HepG2 (cell line): ENCODE measurements at regions of chr20 and their contacts with region 1.

Region 1: DNA sequence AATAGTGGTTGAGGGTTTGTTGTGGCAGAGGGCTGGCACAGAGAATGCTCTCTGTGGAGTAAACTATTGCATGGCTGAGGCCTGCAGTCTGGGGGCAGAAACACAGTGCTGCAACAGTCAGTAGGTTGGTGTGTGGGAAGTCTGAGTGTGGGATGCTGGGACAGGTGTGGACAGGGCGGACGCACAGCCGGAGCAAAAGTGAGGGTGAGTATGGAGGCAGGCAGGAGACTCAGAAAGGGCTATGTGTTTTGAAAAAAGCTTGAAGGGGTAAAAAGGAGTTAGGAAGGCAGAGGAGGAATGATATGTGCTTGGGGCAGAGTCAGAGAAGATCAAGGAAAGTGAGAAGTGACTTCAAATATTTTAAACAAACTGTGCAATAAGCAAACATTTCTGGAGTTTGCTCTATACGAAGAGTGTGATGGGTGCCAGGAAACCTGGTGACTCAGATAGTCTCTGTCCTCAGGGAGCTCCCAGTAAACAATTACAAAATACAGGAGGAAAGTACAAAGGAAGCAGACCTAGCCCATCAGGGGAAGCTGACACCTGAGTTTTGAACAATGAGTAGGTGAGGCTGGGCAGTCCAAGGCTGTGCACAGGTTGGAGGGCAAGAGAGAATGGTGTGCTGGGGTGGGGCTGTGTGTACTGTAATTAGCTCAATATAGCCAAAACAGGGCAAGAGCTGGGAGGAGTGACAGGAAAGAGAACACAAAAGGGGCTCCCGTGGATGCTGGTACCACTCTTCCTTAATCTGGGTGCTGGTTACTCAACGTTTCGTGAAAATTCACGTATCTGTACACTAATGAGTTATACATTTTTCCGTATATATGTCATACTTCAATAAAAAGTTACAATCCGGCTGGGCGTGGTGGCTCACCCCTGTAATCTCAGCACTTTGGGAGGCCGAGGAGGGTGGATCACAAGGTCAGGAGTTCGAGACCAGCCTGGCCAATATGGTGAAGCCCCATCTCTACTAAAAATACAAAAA is 55.2 kb downstream of the PIGU start:
- DNase-seq: peak; percentile 100
- ATAC-seq: peak; percentile 96
- H3K4me3 ChIP-seq: peak overlapping the region in 1 of 3 experiments; percentile 43; a peak in 2 of 6 replicates
- H3K27ac ChIP-seq: peak overlapping the region; percentile 89
- H3K4me1 ChIP-seq: peaks cover 65% of the 10 kb centered on the region
- H3K27me3 ChIP-seq: no peaks in the 10 kb centered on the region
- CTCF ChIP-seq: no peak; the same call in 1 of the 2 replicates
- EP300 ChIP-seq: peak; percentile 95 to 100
- POLR2A ChIP-seq: peak; percentile 22; a peak in 1 of 4 replicates
- RAD21 ChIP-seq: no peak; the same call in 1 of the 2 replicates

Region 2: DNA sequence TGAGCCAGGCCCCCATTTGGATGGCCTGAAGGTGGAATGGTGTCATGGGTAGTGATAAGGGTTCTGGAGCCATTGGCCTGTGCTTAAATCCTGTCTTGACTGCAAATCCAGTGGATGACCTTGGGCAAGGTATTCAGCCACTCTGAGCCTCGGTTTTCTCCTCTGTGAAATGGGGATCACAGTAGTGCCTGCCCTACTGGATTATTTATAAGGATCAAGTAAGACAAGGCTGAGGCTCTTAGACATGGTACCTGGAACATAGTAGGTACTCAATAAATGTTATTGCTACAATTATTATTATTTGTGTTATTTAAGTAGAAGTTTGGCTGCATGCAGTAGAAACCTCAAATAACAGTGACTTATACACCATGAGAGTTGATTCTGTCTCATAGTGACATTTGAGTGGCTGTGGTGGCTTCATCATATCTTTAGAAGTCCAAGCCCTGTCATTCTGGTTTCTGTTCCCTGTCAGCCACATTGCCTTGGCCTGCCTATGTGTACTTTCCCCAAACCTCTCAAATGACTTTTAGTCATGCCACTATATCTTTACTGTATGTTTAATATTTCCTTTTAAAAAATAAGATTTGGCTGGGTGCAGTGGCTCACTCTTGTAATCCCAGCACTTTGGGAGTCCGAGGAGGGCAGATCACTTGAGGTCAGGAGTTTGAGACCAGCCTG is 848.1 kb before region 1 on chr20:
- CTCF ChIA-PET with region 1: no interaction called
- POLR2A ChIA-PET with region 1: no interaction called
- in situ Hi-C with region 1: no loop called
- intact Hi-C with region 1: no loop called
- DNase-seq: no peak
- ATAC-seq: no peak
- H3K4me3 ChIP-seq: no peak overlapping the region
- H3K27ac ChIP-seq: no peak overlapping the region
- H3K4me1 ChIP-seq: peaks cover 10% of the 10 kb centered on the region
- H3K27me3 ChIP-seq: no peaks in the 10 kb centered on the region
- CTCF ChIP-seq: no peak
- EP300 ChIP-seq: no peak
- POLR2A ChIP-seq: no peak
- RAD21 ChIP-seq: no peak

Region 3: DNA sequence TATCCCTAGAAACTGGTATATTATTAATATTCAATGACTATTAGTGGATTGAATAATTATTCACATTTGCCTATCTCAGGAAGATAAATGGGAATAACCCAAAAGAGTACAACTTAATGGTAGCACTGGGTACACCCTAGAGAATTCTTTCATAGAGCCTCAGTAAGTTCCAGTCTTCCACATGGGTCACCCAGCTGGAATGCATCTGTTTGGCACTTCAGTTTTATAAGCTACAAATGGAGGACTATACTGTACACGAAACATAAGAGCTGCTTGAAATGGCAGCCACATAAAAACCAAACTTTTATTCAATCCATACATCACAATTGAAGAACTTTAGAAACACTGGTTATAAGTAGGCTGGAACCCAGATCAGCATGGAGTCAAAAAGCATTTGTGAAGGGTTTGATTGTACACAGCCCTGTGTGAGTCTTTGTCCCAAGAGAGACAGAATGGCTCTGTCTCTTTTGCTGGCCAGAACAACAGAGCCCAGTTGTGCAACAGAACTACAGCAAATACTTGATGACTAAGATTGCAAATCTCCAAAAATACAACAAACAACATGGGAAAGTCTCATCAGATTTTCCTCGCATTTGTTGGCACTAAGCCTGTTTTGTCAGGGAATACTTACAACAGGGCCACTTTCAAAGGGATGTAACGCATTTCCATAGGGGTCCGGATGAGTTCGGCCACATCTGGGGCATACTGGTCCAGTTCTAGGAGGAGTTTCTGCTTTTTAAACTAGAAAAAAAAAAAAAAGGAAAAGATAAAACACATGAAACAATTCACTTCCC is 15.8 kb after region 1 on chr20:
- CTCF ChIA-PET with region 1: no interaction called
- POLR2A ChIA-PET with region 1: interaction called, 44 read pairs
- in situ Hi-C with region 1: no loop called
- intact Hi-C with region 1: loop called (anchors 2 kb)
- DNase-seq: peak; percentile 90
- ATAC-seq: peak; percentile 85
- H3K4me3 ChIP-seq: no peak overlapping the region
- H3K27ac ChIP-seq: peak overlapping the region; percentile 54
- H3K4me1 ChIP-seq: peaks cover 57% of the 10 kb centered on the region
- H3K27me3 ChIP-seq: no peaks in the 10 kb centered on the region
- CTCF ChIP-seq: no peak
- EP300 ChIP-seq: peak; percentile 69 to 87; a peak in 3 of 4 replicates
- POLR2A ChIP-seq: no peak
- RAD21 ChIP-seq: no peak

Region 4: GRCh38 chr20:34709831-34710567 is 88.3 kb after region 1 on chr20:
- CTCF ChIA-PET with region 1: no interaction called
- POLR2A ChIA-PET with region 1: interaction called, 27 read pairs
- in situ Hi-C with region 1: no loop called
- intact Hi-C with region 1: no loop called
- DNase-seq: no peak
- ATAC-seq: no peak
- H3K4me3 ChIP-seq: no peak overlapping the region
- H3K27ac ChIP-seq: no peak overlapping the region
- H3K4me1 ChIP-seq: peaks cover 79% of the 10 kb centered on the region
- H3K27me3 ChIP-seq: no peaks in the 10 kb centered on the region; a peak in 1 of 5 replicates
- CTCF ChIP-seq: peak; percentile 31
- EP300 ChIP-seq: no peak
- POLR2A ChIP-seq: 0 out of 4 replicates have a peak, but pooled peaks of 1 of the 2 experiments have one; percentile 6
- RAD21 ChIP-seq: no peak